ENCODE measurements at regions of chr1 and their contacts with region 1.

Region 1: DNA sequence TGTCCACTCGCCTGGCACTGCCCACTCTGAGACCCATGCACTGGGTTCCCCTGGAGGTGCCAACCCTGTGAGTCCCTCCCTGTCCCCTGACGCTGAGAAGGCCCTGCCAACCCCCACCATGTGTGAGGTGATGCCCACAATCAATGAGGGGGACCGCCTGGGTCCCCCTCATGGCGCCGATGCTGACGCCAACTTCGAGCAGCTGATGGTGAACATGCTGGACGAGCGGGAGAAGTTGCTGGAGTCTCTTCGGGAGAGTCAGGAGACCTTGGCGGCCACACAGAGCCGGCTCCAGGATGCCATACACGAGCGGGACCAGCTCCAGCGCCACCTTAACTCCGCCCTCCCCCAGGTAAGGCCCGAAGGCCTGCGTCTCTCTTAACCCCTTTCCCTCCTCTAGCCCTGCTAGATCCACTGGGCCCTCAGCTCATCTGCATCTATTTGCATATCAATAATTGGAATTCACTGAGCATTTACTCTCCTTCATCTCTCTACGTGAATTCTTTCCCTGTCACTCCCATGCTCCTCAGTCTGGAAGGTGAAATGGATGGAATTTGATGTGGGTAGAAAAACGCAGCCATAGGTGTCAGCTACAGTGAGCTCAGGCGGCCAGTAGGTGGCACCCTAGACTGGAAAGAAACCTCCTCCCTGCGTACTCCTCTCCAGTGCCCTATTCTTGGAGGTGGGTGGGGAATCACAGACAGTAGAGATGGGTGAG is 12.8 kb downstream of the PPFIA4 start:
- DNase-seq: peak; percentile 77
- H3K4me3 Mint-ChIP-seq: no peak overlapping the region
- H3K27ac Mint-ChIP-seq: no peak overlapping the region
- H3K4me1 Mint-ChIP-seq: peaks cover 9% of the 10 kb centered on the region
- H3K27me3 Mint-ChIP-seq: peaks cover 16% of the 10 kb centered on the region

Region 2: GRCh38 chr1:203051841-203052324 is 12.8 kb after region 1 on chr1:
- CTCF ChIA-PET with region 1: interaction called, 44 read pairs
- DNase-seq: no peak
- H3K4me3 Mint-ChIP-seq: no peak overlapping the region
- H3K27ac Mint-ChIP-seq: no peak overlapping the region
- H3K4me1 Mint-ChIP-seq: no peaks in the 10 kb centered on the region
- H3K27me3 Mint-ChIP-seq: peaks cover 13% of the 10 kb centered on the region

Region 3: GRCh38 chr1:203065191-203065590 is 26.1 kb after region 1 on chr1:
- CTCF ChIA-PET with region 1: interaction called, 26 read pairs
- DNase-seq: no peak
- H3K4me3 Mint-ChIP-seq: no peak overlapping the region
- H3K27ac Mint-ChIP-seq: no peak overlapping the region
- H3K4me1 Mint-ChIP-seq: no peaks in the 10 kb centered on the region
- H3K27me3 Mint-ChIP-seq: no peaks in the 10 kb centered on the region

Region 4: GRCh38 chr1:203077956-203078355 is 38.9 kb after region 1 on chr1:
- CTCF ChIA-PET with region 1: no interaction called
- DNase-seq: no peak
- H3K4me3 Mint-ChIP-seq: no peak overlapping the region
- H3K27ac Mint-ChIP-seq: no peak overlapping the region
- H3K4me1 Mint-ChIP-seq: peaks cover 8% of the 10 kb centered on the region
- H3K27me3 Mint-ChIP-seq: peaks cover 71% of the 10 kb centered on the region

Region 5: DNA sequence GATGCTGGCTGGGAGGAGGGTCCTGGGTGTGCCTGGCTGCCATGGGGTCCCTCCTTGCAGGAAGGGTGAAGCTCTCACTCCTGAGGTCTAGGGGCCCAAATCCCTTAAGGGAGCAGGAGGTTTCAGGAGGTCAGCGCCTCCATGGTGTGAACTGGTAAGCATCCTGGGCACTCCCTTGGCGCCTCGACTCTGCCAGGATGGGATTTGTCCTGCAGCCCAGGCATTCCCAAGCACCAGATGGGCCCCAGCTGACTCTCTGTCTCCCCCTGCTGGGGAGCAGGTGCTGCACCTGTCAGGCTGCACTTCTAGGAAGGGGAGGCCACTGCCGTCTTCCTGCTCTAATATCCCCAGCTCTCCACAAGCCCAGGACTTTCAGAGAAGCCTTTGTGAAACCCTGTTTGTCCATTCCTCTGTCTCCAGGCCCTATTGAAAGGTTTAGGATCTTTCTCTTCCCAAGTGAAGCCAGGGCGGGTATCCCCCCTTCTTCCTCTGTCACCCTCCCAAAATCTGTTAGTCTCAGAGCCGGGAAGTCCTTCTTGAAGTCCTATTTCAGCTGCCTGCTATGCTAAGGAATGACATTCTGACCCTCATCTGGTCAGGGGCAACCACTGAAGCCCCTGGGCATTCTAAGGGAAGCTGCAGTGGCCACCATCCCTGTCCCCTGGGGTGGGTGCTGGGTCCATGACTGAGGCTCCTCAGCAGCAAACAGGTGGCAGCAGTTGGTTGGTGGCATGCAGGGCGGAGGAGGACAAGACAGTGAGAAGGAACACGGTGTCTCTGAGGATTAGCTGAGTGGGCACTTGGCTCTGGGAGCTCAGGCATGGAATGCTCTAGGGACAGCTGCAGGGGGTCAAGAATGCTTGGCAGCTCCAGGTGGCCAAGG is 133.3 kb after region 1 on chr1:
- CTCF ChIA-PET with region 1: interaction called, 76 read pairs
- DNase-seq: peak; percentile 69
- H3K4me3 Mint-ChIP-seq: no peak overlapping the region
- H3K27ac Mint-ChIP-seq: no peak overlapping the region
- H3K4me1 Mint-ChIP-seq: no peaks in the 10 kb centered on the region
- H3K27me3 Mint-ChIP-seq: no peaks in the 10 kb centered on the region

Measured in activated naive CD4-positive, alpha-beta T cell treated with anti-CD3 and anti-CD28 coated beads, Interleukin-2, amount 10 ng/mL, durations not matched to agents 7 days and 5 days (primary cell).